CD14-positive monocyte (primary cell): ENCODE measurements at regions of chr2 and their contacts with region 1.

Region 1: DNA sequence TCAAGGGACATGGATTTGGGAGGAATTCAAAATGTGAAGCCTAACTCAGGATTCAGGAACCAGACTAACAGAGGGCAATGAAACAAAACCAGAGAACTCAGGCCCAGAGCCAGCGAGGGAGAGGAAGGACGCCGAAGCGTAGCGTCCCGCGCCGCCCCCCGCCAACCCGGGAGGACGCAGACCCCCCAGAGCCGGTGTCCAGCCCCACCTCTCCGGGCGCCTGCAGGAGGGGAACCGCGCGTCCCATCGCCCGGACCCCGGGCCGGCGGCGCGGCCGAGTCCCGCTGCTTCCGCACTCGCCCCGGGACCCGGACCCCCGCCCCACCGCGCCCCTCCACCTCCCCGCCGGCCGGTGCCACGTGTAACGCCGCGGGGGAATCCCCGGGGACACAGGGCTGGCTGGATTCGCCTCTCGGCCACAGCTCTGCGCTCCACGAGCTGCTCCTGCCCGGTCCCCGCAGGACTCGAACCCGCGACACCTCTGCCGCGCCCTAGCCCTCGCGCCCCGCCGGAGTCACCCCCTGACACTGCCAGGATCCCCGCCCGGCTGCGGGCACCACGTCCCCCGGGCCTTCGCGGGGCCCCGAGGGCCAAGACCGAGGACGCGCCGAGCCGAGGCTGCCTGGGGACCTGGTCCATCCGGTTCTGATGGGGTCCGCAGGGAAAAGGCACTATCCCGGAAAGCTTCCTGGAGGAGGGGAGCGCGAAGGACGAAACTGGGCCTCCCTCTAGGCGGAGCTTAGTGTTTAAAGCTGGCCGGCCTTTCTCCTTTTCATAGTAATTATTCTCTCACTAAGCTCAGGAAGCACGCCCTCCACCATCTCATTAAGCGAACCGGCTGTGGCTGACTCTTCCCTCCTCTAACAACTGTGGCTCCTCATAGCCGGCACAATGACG is 40.4 kb upstream of the FAM124B start:
- DNase-seq: peak; percentile 8 to 26 (median 11)
- H3K4me3 ChIP-seq: peak overlapping the region; percentile 46 to 80 (median 46)
- H3K4me3 Mint-ChIP-seq: peak overlapping the region; percentile 80 to 93
- H3K27ac ChIP-seq: peak overlapping the region in 1 of 2 donors; percentile 41
- H3K27ac Mint-ChIP-seq: peak overlapping the region in 4 of 7 donors; percentile 53 to 82 (median 68)
- H3K4me1 ChIP-seq: peaks cover 14 to 17% of the 10 kb centered on the region in 2 donors
- H3K4me1 Mint-ChIP-seq: peaks cover 28% of the 10 kb centered on the region
- H3K27me3 ChIP-seq: no peaks in the 10 kb centered on the region
- H3K27me3 Mint-ChIP-seq: peaks cover 9 to 25% (median 11%) of the 10 kb centered on the region in 3 donors
- CTCF ChIP-seq: no peak

Region 2: GRCh38 chr2:224369028-224369632 is 73.2 kb before region 1 on chr2:
- intact Hi-C with region 1: loop called in 1 of 2 experiments (anchors 5 kb)
- DNase-seq: peak; percentile 15 to 46 (median 32)
- H3K4me3 ChIP-seq: no peak overlapping the region
- H3K4me3 Mint-ChIP-seq: no peak overlapping the region
- H3K27ac ChIP-seq: no peak overlapping the region
- H3K27ac Mint-ChIP-seq: no peak overlapping the region
- H3K4me1 ChIP-seq: peaks cover 0 to 4% of the 10 kb centered on the region in 2 donors
- H3K4me1 Mint-ChIP-seq: peaks cover 12% of the 10 kb centered on the region
- H3K27me3 ChIP-seq: no peaks in the 10 kb centered on the region
- H3K27me3 Mint-ChIP-seq: no peaks in the 10 kb centered on the region
- CTCF ChIP-seq: peak; percentile 90

Region 3: GRCh38 chr2:224405412-224405811 is 36.9 kb before region 1 on chr2:
- intact Hi-C with region 1: loop called in 1 of 2 experiments (anchors 5 kb)
- DNase-seq: peak; percentile 56 to 62 (median 61)
- H3K4me3 ChIP-seq: peak overlapping the region in 1 of 3 experiments; percentile 10
- H3K4me3 Mint-ChIP-seq: no peak overlapping the region
- H3K27ac ChIP-seq: peak overlapping the region; percentile 52 to 86
- H3K27ac Mint-ChIP-seq: no peak overlapping the region
- H3K4me1 ChIP-seq: peaks cover 45 to 56% of the 10 kb centered on the region in 2 donors
- H3K4me1 Mint-ChIP-seq: peaks cover 21% of the 10 kb centered on the region
- H3K27me3 ChIP-seq: no peaks in the 10 kb centered on the region
- H3K27me3 Mint-ChIP-seq: no peaks in the 10 kb centered on the region
- CTCF ChIP-seq: no peak

Region 4: DNA sequence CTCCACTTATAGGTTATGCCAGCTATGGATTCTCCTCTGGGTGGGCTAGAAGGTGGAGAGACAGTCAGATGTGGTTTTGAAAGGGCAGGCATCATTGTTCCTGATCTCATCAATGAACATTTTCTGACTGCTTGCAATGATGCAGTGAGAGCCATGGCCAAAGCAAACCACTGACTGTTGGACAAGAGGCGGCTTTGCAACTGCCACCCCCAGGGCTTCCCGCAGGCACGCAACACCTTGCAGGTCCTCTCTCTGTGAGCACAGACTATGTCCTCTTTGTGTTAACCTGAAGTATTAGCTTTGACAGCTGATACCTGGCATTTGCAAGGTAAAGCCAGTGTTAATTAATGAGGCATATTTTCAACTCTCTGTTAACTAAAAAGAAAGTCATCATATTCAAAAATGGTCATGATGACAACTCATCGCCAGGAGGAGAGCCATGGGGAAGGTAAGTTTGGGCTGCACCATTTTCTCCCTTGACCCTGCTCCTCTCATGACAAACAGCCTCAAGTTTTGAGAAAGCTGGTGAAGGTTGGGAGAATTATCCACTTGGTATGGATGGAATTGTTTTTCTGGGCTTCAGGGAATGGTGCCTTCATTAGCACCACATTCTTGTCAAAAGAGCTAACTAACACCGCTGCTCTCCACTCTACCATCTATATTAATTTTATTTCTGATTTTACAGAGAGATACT is 25.5 kb before region 1 on chr2:
- intact Hi-C with region 1: no loop called
- DNase-seq: no peak
- H3K4me3 ChIP-seq: no peak overlapping the region
- H3K4me3 Mint-ChIP-seq: no peak overlapping the region
- H3K27ac ChIP-seq: no peak overlapping the region
- H3K27ac Mint-ChIP-seq: no peak overlapping the region
- H3K4me1 ChIP-seq: no peaks in the 10 kb centered on the region
- H3K4me1 Mint-ChIP-seq: no peaks in the 10 kb centered on the region
- H3K27me3 ChIP-seq: no peaks in the 10 kb centered on the region
- H3K27me3 Mint-ChIP-seq: peaks cover 2 to 4% (median 3%) of the 10 kb centered on the region in 3 donors
- CTCF ChIP-seq: no peak